PC-3 (cell line): ENCODE measurements at regions of chr3 and their contacts with region 1.

Region 1: DNA sequence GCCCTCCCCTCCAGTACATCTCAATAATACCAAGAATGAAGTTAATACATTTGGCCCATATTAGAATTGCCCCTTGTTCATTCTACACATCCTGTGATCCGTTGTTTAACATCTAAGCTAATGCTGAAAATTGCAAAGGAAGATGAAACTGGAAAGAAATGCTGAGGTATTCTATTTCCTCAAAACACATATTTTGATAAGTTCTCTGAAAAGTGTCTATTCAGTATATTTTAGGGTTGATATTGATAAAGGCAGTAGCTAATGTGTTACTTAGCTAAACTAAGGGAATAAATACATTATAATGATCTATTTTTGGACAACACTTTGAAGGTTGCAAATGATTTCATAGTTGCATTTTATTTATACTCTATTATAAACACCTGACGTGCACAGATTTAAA is 702.6 kb upstream of the ROBO1 start:
- DNase-seq: no peak
- ATAC-seq: no peak
- H3K4me3 ChIP-seq: no peak overlapping the region
- H3K27ac ChIP-seq: no peak overlapping the region
- H3K4me1 ChIP-seq: no peaks in the 10 kb centered on the region
- H3K27me3 ChIP-seq: no peaks in the 10 kb centered on the region
- CTCF ChIP-seq: no peak

Region 2: DNA sequence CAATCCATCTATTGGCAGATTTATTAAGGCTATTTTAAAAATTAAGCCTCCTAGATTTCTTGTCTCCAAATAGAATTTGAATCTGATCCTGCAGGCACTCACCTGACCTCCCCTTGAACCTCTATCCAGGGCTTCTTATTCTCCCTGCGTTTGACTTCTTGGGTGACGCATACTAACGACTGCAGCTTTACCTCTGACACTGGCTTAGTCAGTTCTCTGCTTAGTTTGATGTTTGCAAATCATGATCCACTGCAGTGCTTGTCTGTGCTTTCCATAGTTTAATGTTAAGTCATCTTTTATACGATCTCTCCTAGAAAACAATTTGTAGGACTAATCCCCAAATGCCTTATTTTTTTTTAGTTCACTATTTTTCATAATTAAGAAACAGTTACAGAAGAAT is 935.7 kb before region 1 on chr3:
- CTCF ChIA-PET with region 1: no interaction called
- POLR2A ChIA-PET with region 1: interaction called, 23 read pairs
- intact Hi-C with region 1: no loop called
- DNase-seq: peak; percentile 80
- ATAC-seq: peak; percentile 86
- H3K4me3 ChIP-seq: no peak overlapping the region
- H3K27ac ChIP-seq: peak overlapping the region; percentile 67
- H3K4me1 ChIP-seq: peaks cover 46% of the 10 kb centered on the region
- H3K27me3 ChIP-seq: no peaks in the 10 kb centered on the region
- CTCF ChIP-seq: no peak

Region 3: GRCh38 chr3:80517621-80518020 is 47.2 kb after region 1 on chr3:
- CTCF ChIA-PET with region 1: no interaction called
- POLR2A ChIA-PET with region 1: no interaction called
- intact Hi-C with region 1: no loop called
- DNase-seq: no peak
- ATAC-seq: no peak
- H3K4me3 ChIP-seq: no peak overlapping the region
- H3K27ac ChIP-seq: no peak overlapping the region
- H3K4me1 ChIP-seq: peaks cover 16% of the 10 kb centered on the region
- H3K27me3 ChIP-seq: no peaks in the 10 kb centered on the region
- CTCF ChIP-seq: no peak